K562 (cell line): ENCODE measurements at regions of chr11 and their contacts with region 1.

Region 1: GRCh38 chr11:78798660-78799059 is 224.0 kb upstream of the NARS2 start:
- DNase-seq: peak; percentile 62 to 75 (median 65)
- ATAC-seq: peak; percentile 100
- H3K4me3 ChIP-seq: no peak overlapping the region
- H3K27ac ChIP-seq: no peak overlapping the region
- H3K4me1 ChIP-seq: no peaks in the 10 kb centered on the region
- H3K27me3 ChIP-seq: peaks cover 0 to 6% of the 10 kb centered on the region in 2 experiments; a peak in 1 of 5 replicates
- CTCF ChIP-seq: peak; percentile 76 to 85 (median 79)
- EP300 ChIP-seq: no peak
- POLR2A ChIP-seq: no peak
- RAD21 ChIP-seq: peak; percentile 44 to 66; a peak in 3 of 4 replicates

Region 2: DNA sequence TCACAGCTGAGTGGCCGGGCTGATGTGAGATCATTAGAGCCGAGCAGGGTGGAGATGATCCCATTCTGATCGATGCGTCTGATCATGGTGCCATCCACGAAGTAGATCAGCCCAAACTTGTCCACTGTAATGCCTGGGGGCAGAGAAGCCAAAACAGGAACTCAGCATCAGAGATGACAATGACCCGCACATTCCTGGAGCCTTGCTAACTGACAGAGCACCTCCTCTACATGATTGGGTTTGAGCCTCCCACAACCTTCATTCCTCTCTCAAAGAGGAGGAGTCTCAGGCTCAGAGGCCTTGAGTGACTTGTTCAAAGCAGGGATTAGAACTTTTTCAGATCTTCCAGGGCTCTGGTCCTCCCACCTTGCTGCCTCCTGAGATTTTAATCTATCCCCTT is 90.3 kb before region 1 on chr11:
- CTCF ChIA-PET with region 1: no interaction called
- POLR2A ChIA-PET with region 1: no interaction called
- in situ Hi-C with region 1: no loop called
- intact Hi-C with region 1: no loop called
- DNase-seq: no peak
- ATAC-seq: no peak
- H3K4me3 ChIP-seq: no peak overlapping the region
- H3K27ac ChIP-seq: no peak overlapping the region
- H3K4me1 ChIP-seq: no peaks in the 10 kb centered on the region
- H3K27me3 ChIP-seq: peaks cover 6 to 26% of the 10 kb centered on the region in 2 experiments; a peak in 4 of 5 replicates
- CTCF ChIP-seq: no peak
- EP300 ChIP-seq: no peak
- POLR2A ChIP-seq: no peak
- RAD21 ChIP-seq: no peak

Region 3: DNA sequence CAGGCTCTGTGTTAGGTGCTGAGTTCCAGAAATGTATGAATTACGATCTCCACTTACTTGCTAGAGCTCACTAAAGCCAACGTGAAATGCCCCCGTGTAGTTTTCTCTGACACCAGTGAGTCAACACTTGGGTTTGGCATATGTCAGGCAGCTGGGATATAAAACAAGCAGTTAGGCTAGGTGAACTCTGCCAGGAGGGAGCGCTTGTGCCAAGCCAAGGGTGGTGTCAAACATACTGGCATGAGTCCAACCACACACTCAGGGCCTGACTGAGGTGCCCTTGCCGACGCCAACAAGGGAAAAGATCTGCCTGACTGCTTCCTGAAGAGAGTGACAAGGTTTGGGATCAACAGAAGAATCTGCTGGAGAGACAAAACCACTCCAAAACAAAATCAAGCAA is 56.2 kb before region 1 on chr11:
- CTCF ChIA-PET with region 1: no interaction called
- POLR2A ChIA-PET with region 1: no interaction called
- in situ Hi-C with region 1: no loop called
- intact Hi-C with region 1: no loop called
- DNase-seq: no peak
- ATAC-seq: no peak
- H3K4me3 ChIP-seq: no peak overlapping the region
- H3K27ac ChIP-seq: no peak overlapping the region
- H3K4me1 ChIP-seq: no peaks in the 10 kb centered on the region
- H3K27me3 ChIP-seq: peaks cover 2 to 14% of the 10 kb centered on the region in 2 experiments; a peak in 3 of 5 replicates
- CTCF ChIP-seq: no peak
- EP300 ChIP-seq: no peak
- POLR2A ChIP-seq: no peak
- RAD21 ChIP-seq: no peak

Region 4: DNA sequence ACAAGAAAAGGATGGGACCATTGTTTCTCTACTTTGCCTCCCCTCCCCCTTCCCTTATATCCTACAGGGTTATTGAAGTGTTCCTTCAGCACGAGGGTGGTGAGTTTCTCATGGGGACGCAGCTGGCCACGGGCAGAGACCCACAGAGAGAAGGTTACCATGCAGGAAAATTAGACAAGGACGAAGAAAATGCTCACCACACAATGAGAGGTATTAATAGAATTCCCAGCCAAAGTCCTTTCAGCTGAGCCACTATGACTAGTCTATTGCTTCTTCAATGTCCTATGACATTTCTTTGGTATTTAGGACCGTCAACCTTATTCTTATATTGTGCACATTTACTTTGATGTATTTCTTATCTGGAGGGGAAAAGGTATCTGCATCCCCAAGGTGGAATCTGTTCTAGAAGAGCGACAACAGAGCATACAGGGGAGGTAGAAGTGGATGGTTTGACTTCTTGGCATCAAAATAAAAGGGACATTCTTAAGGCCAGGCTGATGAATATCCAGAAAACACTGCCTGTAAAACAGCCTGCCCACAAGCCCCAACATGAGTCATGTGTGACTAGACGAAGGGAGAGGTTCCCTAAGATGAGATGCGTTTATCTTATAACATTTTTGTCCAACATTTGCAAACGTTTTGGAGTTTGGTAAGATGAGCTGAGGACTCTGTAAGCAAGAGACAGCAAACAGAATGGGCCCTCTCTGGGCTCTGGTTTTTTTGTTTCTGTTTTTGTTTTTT is 14.2 kb before region 1 on chr11:
- CTCF ChIA-PET with region 1: no interaction called
- POLR2A ChIA-PET with region 1: no interaction called
- in situ Hi-C with region 1: no loop called
- intact Hi-C with region 1: no loop called
- DNase-seq: no peak
- ATAC-seq: no peak
- H3K4me3 ChIP-seq: no peak overlapping the region
- H3K27ac ChIP-seq: no peak overlapping the region
- H3K4me1 ChIP-seq: 0 out of 5 replicates have a peak, but pooled peaks cover 0 to 3% of the 10 kb centered on the region in 2 experiments
- H3K27me3 ChIP-seq: peaks cover 0 to 19% of the 10 kb centered on the region in 2 experiments; a peak in 2 of 5 replicates
- CTCF ChIP-seq: no peak
- EP300 ChIP-seq: no peak
- POLR2A ChIP-seq: no peak
- RAD21 ChIP-seq: no peak

Region 5: GRCh38 chr11:78961247-78961646 is 162.6 kb after region 1 on chr11:
- CTCF ChIA-PET with region 1: interaction called, 4 read pairs
- POLR2A ChIA-PET with region 1: no interaction called
- in situ Hi-C with region 1: no loop called
- intact Hi-C with region 1: loop called (anchors 10 kb)
- DNase-seq: peak; percentile 16 to 24 (median 20)
- ATAC-seq: peak; percentile 82
- H3K4me3 ChIP-seq: no peak overlapping the region
- H3K27ac ChIP-seq: no peak overlapping the region
- H3K4me1 ChIP-seq: no peaks in the 10 kb centered on the region
- H3K27me3 ChIP-seq: peaks cover 0 to 7% of the 10 kb centered on the region in 2 experiments; a peak in 2 of 5 replicates
- CTCF ChIP-seq: peak; percentile 40 to 54 (median 48); a peak in 5 of 6 replicates
- EP300 ChIP-seq: no peak
- POLR2A ChIP-seq: no peak
- RAD21 ChIP-seq: peak; percentile 47 to 57